RWPE1 (cell line): ENCODE measurements at regions of chr1 and their contacts with region 1.

Region 1: DNA sequence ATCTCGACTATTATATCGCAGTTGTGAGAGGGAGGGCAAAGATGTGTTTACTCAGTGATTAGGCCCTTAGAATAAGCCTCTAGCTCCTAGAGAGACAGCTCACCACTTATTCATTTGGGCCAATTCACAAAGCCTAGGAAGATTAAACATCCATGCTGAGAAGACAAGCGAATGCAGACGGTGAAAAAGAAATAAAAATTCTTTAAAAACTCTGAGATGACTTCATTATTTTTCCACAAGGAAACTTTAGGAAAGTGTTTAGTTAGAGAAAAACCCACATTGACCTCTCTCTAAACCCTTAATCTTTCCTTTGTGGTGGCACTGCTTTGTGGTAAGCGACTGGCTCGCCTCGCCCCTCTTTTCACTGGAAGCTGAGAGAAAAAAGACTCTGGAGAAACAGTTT is 146.8 kb upstream of the DMRTA2 start:
- DNase-seq: no peak
- H3K27ac ChIP-seq: no peak overlapping the region
- CTCF ChIP-seq: no peak

Region 2: DNA sequence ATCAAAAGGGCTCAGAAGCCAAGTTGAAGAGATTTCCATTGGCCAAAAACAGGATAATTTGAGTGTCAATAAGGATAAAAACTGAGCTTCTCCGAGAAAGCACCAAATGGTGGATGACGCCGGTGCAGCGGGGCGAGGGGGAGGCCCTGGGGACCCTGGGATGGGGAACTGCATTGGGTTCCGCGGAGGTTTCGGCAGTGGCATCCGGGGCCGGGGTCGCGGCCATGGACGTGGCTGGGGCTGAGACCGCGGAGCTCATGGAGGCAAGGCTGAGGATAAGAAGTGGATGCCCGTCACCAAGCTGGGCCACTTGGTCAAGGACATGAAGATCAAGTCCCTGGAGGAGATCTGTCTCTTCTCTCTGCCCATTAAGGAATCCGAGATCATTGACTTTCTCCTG is 244.0 kb before region 1 on chr1:
- CTCF ChIA-PET with region 1: no interaction called
- POLR2A ChIA-PET with region 1: interaction called, 11 read pairs
- DNase-seq: no peak
- H3K27ac ChIP-seq: no peak overlapping the region
- CTCF ChIP-seq: no peak

Region 3: DNA sequence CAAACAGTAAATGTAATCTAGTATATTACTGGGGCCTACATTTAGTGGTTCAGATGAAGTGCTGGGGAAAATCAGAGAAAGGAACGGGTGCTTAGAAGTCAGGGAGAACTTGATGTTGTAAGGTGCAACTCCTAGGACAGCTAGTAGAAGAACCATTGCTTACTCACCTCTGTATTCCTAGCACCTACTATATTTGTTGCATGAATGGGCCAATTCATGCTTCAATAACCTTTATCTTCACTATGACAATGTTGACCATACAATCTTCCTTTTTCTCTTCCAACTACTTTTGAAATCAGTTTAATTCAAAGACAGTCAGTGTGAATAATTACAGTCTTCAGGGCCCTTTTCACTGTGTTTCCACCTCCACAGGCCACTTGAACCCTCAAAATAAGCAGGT is 21.8 kb before region 1 on chr1:
- CTCF ChIA-PET with region 1: no interaction called
- POLR2A ChIA-PET with region 1: no interaction called
- DNase-seq: no peak
- H3K27ac ChIP-seq: no peak overlapping the region
- CTCF ChIP-seq: no peak

Region 4: DNA sequence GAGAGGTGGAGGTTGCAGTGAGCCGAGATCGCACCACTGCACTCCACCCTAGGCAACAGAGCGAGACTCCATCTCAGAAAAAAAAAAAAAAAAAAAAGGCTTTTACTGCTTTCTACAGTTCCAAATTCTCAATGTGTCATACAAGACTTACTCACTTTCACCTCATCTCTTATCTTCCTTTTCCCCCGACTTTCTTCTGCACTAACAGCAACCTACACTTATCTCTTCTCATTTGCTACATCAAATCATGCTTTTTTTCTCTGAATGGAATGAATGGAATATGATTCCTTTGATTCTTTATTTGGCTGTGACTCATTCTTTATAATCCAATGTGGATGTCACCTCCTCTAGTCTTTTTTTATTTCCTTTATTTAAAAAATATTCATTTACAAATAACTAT is 21.5 kb after region 1 on chr1:
- CTCF ChIA-PET with region 1: no interaction called
- POLR2A ChIA-PET with region 1: no interaction called
- DNase-seq: no peak
- H3K27ac ChIP-seq: no peak overlapping the region
- CTCF ChIP-seq: no peak